ENCODE measurements at regions of chr2 and their contacts with region 1.

Region 1: DNA sequence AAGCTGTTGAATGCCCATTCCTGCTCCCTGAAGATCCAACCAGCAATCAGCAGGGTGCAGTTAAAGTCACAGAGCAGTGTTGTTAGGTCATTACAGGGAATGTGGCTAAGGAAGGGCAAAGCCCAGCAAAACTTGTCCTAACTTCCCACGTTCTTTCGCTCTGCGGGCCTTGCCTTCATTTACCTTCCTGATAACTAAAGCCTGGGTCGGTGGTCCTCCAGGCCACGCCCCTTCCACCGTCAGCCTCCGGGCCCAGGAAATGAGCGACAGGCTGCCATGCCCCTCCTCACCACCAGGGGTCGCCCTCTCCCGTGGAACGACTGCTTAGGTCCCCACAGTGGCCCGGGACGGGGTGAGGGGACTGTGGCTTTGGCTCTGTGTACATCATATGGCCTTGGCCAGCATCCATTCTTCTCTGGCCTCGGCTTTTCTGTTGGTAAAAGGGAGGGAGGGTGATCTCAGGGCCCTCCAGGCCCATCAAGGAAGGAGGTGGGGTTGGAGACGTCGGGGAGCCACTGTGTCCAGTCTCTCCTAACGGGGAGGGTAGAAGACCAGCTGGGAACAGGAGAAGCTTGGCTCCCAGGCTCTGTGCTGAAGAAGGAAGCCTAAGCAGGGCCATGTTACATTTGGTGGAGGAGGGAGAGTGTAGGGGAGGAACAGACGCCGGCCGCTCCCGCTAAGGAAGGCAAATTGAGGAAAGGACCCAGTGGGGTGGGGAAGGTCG is 2.2 kb downstream of the SH2D6 start:
- DNase-seq: peak; percentile 94
- H3K4me3 Mint-ChIP-seq: peak overlapping the region; percentile 61
- H3K27ac Mint-ChIP-seq: no peak overlapping the region
- H3K4me1 Mint-ChIP-seq: peaks cover 17% of the 10 kb centered on the region
- H3K27me3 Mint-ChIP-seq: no peaks in the 10 kb centered on the region

Region 2: DNA sequence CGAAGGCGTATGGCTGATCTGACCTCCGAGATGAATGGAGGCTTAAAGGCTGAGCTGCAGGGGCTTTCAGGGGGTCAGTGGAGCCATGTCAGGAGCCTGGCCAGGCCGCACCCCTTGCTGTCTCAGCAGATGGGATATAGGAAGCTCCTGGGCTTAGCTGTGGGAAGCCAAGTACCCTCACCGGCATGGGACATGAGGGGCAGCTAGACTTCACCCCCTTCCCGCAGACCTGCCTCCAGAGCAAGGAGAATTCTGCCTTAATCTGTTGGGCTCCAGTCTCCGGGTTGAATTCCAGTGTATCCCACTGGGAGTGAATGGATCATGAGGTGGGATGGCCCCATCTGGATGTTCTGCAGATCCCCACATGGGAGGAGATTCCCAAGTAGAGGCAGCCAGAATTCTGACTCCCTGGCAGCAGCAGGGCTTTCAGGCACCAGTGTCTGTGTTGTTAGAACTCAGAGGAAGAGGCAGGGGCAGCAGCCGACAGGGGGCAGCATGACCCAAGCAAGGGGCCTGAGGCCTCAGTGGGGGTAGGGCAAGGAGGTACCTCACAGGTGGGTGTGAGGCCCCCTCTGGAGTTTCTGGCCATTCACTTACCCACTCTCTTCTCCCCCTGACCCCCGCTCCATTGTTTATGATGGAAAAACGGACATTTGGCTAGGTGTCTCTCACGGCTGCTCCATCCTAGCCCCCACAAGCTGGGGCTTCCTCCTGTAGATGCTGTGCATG is 29.6 kb before region 1 on chr2:
- CTCF ChIA-PET with region 1: interaction called, 4 read pairs
- intact Hi-C with region 1: loop called (anchors 1 kb)
- DNase-seq: peak; percentile 79
- H3K4me3 Mint-ChIP-seq: no peak overlapping the region
- H3K27ac Mint-ChIP-seq: no peak overlapping the region
- H3K4me1 Mint-ChIP-seq: peaks cover 5% of the 10 kb centered on the region
- H3K27me3 Mint-ChIP-seq: no peaks in the 10 kb centered on the region

Region 3: DNA sequence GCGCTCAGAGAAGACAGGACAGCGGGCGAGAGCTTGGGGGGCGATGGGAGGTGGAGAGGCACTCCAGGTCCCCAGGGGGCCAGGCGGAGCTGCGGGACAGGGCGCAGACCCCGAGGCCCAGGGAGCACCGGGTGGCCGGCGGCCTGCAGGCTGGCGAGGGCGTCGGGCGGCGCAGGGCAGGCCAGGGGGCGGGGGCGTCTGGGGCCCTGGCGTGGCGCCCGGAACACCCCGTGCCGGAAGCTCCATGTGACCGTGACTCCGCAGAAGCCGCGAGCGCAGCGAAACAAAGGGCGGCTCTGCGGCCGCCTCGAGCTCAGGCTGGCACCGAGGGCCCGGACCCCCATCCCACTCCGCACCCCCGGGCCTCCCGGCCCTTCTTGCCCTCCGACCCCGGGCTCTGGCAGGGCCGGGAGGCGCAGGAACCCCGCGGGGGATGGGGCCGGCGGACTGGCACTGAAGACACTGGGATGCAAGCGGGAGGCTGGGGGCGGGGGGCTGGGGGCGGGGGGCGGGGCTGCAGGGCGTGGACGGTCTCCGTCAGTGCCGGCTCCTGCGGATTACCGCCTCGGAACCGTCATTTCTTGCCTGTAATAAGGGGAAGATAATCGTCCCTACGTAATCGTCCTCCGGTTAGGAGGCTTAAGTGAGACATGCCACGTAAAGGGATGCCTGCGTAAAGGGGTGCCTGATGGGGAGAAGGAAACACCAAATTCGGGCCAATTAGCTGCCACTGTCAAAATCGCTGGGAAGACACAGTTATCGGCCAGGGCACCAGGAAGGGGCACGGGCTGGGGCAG is 17.0 kb after region 1 on chr2:
- CTCF ChIA-PET with region 1: interaction called, 22 read pairs
- intact Hi-C with region 1: loop called (anchors 1 kb)
- DNase-seq: peak; percentile 87
- H3K4me3 Mint-ChIP-seq: peak overlapping the region; percentile 77
- H3K27ac Mint-ChIP-seq: peak overlapping the region; percentile 89
- H3K4me1 Mint-ChIP-seq: peaks cover 26% of the 10 kb centered on the region
- H3K27me3 Mint-ChIP-seq: no peaks in the 10 kb centered on the region

Region 4: DNA sequence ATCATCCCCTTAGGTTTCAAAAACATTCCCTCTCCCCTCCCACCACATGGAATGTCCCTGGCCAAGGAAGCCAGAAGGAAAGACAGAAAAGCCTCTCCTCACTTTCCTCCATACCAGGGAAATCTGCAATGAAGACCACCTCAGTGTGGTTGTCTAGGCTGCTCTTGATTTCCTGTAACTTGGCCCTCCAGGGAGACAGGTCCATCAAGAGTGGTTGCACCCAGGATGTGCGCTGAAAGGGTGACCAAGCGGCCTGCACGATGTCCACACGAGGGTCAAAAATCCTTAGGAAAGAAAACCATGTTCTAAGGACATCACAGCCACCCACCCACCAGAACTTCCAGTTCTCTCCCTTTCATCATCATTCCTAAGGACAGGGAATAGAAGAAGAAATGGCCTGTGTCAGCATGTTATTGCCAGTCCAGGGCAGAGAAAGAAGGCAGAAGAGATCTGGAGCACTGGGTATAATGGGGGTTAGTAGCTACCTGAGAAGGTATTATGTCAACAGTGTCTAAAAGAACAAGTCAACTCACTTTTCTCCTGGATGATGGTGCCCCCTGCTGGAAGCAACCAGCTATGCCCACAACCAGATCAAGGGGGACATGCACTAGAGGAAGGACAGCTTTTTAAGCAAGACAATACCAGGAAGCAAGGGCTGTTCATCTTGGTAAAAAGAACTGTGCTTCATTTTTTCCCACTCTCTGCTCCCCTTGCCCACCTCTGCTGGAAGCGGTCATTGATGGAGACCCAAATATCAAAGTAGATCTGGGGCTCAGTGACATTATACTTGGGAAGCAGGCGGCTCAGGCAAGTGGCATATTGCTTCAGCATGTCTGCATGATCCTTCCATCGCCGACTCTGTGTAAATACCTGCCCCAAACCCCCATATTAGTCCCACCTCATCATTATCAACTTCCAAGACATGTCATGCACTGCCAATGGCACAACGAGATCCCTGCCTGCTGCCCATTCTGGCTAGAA is 131.3 kb after region 1 on chr2:
- CTCF ChIA-PET with region 1: interaction called, 282 read pairs
- intact Hi-C with region 1: loop called (anchors 1 kb)
- DNase-seq: peak; percentile 95
- H3K4me3 Mint-ChIP-seq: no peak overlapping the region
- H3K27ac Mint-ChIP-seq: no peak overlapping the region
- H3K4me1 Mint-ChIP-seq: peaks cover 2% of the 10 kb centered on the region
- H3K27me3 Mint-ChIP-seq: no peaks in the 10 kb centered on the region

Region 5: GRCh38 chr2:85635636-85636035 is 214.9 kb after region 1 on chr2:
- CTCF ChIA-PET with region 1: interaction called, 10 read pairs
- intact Hi-C with region 1: loop called (anchors 2 kb)
- DNase-seq: no peak
- H3K4me3 Mint-ChIP-seq: no peak overlapping the region
- H3K27ac Mint-ChIP-seq: no peak overlapping the region
- H3K4me1 Mint-ChIP-seq: peaks cover 9% of the 10 kb centered on the region
- H3K27me3 Mint-ChIP-seq: no peaks in the 10 kb centered on the region

Region 6: DNA sequence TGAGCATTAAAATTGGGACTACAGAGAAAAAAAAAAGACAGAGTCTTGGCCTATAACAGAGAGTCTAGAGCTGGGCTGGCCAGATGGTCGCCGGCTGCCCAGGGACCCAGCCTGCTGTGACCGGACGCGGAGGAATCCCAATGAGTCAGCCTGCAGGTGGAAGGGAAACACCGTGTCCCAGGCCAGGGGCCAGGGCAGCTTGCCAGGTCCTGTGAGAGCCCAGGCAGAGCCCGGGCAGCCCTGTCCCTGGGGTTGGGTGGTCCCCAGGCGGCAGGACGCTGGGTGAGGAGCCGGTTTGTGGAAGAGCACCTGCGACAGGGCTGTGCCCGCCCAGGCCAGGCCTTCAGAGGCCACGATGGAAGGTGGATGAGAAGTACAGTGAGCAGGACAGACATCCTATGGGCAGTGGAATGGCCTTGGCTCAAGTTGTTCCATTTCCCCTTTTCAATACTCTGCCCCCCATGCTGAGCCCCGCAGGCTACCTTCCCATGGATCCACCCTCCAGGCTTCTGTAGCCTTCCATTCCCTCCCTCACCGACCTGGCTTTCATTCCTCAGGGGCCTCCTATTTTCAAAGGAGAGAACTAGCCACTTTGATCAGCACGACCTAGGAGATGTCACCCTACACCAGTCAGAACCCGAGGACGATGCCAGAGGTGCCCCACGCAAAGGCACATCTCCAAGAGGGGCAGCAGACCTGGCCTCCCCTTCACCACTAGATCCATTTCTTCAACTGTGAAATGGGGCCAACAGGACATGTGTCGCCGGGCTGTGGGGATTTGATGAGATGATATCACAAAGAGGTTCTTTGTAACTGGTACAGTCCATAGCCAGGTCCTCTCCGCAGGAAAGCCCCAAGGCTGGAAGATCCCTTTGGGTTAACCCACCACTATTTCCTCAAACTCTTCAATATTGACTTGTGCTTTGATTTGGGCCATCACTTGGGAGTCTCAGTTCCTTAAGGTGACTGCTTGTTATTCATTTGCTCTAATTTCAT is 597.5 kb after region 1 on chr2:
- CTCF ChIA-PET with region 1: no interaction called
- intact Hi-C with region 1: no loop called
- DNase-seq: no peak
- H3K4me3 Mint-ChIP-seq: no peak overlapping the region
- H3K27ac Mint-ChIP-seq: no peak overlapping the region
- H3K4me1 Mint-ChIP-seq: peaks cover 9% of the 10 kb centered on the region
- H3K27me3 Mint-ChIP-seq: no peaks in the 10 kb centered on the region

Region 7: GRCh38 chr2:86035883-86036668 is 615.4 kb after region 1 on chr2:
- CTCF ChIA-PET with region 1: no interaction called
- intact Hi-C with region 1: loop called (anchors 10 kb)
- DNase-seq: peak; percentile 74
- H3K4me3 Mint-ChIP-seq: peak overlapping the region; percentile 58
- H3K27ac Mint-ChIP-seq: peak overlapping the region; percentile 95
- H3K4me1 Mint-ChIP-seq: peaks cover 81% of the 10 kb centered on the region
- H3K27me3 Mint-ChIP-seq: no peaks in the 10 kb centered on the region

Measured in activated naive CD4-positive, alpha-beta T cell treated with anti-CD3 and anti-CD28 coated beads for 36 hours (primary cell).